Common myeloid progenitor, CD34-positive (primary cell): ENCODE measurements at regions of chr5 and their contacts with region 1.

Region 1: DNA sequence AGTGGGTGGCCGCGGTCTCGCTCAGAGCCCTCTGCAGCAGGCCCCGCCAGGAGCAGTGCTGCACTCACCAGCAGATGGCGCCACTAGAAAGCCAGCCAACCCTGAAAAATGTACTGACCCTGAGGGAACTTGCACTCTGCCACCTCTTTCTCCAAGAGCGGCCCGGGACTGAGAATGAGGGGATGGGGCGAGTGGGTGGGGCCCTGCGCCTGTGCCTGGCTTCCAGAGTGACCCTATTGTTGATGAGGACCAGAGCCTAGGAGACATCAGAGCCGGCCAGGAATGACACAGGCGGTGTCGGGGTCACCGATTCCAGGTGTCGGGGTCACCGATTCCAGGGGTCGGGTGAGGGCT is 2.9 kb upstream of the IL17B start:
- DNase-seq: peak; percentile 61 to 78 (median 72)
- H3K4me3 ChIP-seq: no peak overlapping the region
- H3K27ac ChIP-seq: no peak overlapping the region
- H3K4me1 ChIP-seq: peaks cover 0 to 8% (median 6%) of the 10 kb centered on the region in 4 experiments
- H3K27me3 ChIP-seq: no peaks in the 10 kb centered on the region

Region 2: GRCh38 chr5:149357370-149358293 is 24.3 kb before region 1 on chr5 and contains the start of gene PCYOX1L:
- CTCF ChIA-PET with region 1: interaction called, 209 read pairs
- POLR2A ChIA-PET with region 1: no interaction called
- DNase-seq: peak; percentile 92 to 96 (median 93)
- H3K4me3 ChIP-seq: peak within 1 kb of the TSS; percentile 67 to 92 (median 82)
- H3K27ac ChIP-seq: peak within 1 kb of the TSS in 1 of 2 experiments; percentile 73
- H3K4me1 ChIP-seq: peaks cover 2 to 34% (median 13%) of the 10 kb centered on the region in 4 experiments
- H3K27me3 ChIP-seq: no peaks in the 10 kb centered on the region

Region 3: DNA sequence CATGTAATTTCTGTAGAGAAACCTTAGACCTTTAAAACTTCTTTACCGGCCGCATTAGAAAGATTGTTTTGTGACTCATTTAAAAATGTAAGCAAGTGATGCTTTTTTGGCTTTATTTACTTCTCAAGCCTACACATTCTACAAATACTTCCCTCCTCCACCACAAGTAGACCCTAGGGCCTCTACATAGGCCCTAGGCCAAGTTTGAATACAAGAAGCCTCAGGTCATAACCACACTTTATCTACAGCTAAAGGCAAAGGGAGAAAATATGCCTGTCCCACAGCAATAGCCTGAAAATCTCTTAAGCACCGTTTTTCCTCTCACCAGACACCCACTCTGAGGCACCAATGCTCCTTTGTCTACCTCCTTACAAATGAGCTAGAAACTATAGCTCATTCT is 115.4 kb after region 1 on chr5:
- CTCF ChIA-PET with region 1: no interaction called
- POLR2A ChIA-PET with region 1: no interaction called
- DNase-seq: peak in 1 of 3 donors; percentile 28
- H3K4me3 ChIP-seq: no peak overlapping the region
- H3K27ac ChIP-seq: peak overlapping the region in 1 of 2 experiments; percentile 18
- H3K4me1 ChIP-seq: no peaks in the 10 kb centered on the region
- H3K27me3 ChIP-seq: no peaks in the 10 kb centered on the region

Region 4: DNA sequence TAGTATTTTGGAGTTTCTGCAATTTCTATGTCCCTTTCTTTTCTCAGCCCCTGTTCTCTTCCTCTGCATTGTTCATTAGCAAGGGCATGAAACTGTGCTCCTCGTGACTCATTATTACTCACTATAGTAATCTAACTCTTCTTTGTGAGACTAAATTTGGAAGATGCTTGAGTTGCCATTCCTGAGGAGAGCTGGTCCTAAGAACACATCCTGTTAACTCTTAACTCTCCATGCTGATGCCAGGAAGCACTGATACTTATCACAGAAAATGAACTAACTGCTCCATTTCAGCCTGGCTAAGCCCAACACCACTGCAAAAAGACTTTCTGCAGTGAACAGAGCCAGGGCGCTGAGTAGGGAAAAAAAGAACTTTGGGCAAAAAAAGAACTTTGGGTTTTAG is 179.9 kb after region 1 on chr5:
- CTCF ChIA-PET with region 1: interaction called, 90 read pairs
- POLR2A ChIA-PET with region 1: no interaction called
- DNase-seq: peak in 1 of 3 donors; percentile 18
- H3K4me3 ChIP-seq: no peak overlapping the region
- H3K27ac ChIP-seq: no peak overlapping the region
- H3K4me1 ChIP-seq: peaks cover 0 to 10% (median 0%) of the 10 kb centered on the region in 4 experiments
- H3K27me3 ChIP-seq: no peaks in the 10 kb centered on the region